Right cardiac atrium (tissue), 5 donors: ENCODE measurements at regions of chr11 and their contacts with region 1.

Region 1: GRCh38 chr11:64723117-64723906 is at the start of gene NRXN2:
- DNase-seq: peak; percentile 86 to 95 (median 93)
- ATAC-seq: peak; percentile 96 to 97
- H3K4me3 ChIP-seq: peak within 1 kb of the TSS; percentile 66
- H3K27ac ChIP-seq: no peak within 1 kb of the TSS
- H3K4me1 ChIP-seq: no peaks in the 10 kb centered on the region
- H3K27me3 ChIP-seq: no peaks in the 10 kb centered on the region
- total RNA-seq, gene NRXN2: 2.1 to 5.7 (median 2.9) TPM

Region 2: GRCh38 chr11:64165495-64165848 is 557.8 kb before region 1 on chr11:
- intact Hi-C with region 1: no loop called
- DNase-seq: peak in 1 of 3 donors; percentile 70
- ATAC-seq: peak in 1 of 2 donors; percentile 5
- H3K4me3 ChIP-seq: peak overlapping the region; percentile 86
- H3K27ac ChIP-seq: peak overlapping the region; percentile 15
- H3K4me1 ChIP-seq: no peaks in the 10 kb centered on the region
- H3K27me3 ChIP-seq: no peaks in the 10 kb centered on the region

Region 3: GRCh38 chr11:64688534-64688982 is 34.8 kb before region 1 on chr11:
- intact Hi-C with region 1: loop called in 2 of 4 experiments (anchors 2 to 5 kb)
- DNase-seq: peak; percentile 90 to 96 (median 96)
- ATAC-seq: peak; percentile 92
- H3K4me3 ChIP-seq: peak overlapping the region; percentile 55
- H3K27ac ChIP-seq: peak overlapping the region; percentile 89
- H3K4me1 ChIP-seq: no peaks in the 10 kb centered on the region
- H3K27me3 ChIP-seq: no peaks in the 10 kb centered on the region

Region 4: GRCh38 chr11:64905516-64906313 is 182.4 kb after region 1 on chr11:
- intact Hi-C with region 1: no loop called
- DNase-seq: peak in 1 of 3 donors; percentile 52
- ATAC-seq: peak in 1 of 2 donors; percentile 4
- H3K4me3 ChIP-seq: no peak overlapping the region
- H3K27ac ChIP-seq: no peak overlapping the region
- H3K4me1 ChIP-seq: no peaks in the 10 kb centered on the region
- H3K27me3 ChIP-seq: no peaks in the 10 kb centered on the region